Heart left ventricle (tissue), 16 donors: ENCODE measurements at regions of chr7 and their contacts with region 1.

Region 1: DNA sequence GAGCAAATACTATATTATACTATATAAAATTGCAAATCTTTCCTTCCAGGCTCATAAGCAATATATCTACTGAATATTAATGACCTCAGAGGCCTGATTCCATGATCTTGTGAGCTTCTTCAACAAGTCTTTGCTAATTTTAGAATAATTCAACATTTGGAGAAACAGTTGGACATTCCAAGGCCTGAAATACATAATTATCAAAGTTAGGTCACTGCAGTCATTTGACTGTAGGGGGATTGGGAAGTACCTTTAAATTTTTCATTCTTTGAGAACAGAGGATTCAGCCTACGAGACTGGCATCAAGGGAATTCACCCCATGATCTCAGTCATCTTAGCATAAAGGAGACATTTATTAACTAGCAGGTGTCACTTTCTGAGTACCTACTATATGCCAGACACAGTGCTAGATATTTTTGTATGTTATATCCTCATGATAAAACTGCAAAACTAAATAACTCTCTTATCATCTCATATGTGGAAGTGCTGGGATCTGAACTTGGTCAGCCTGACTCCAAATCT is 85.4 kb downstream of the DOCK4 start:
- DNase-seq: no peak
- ATAC-seq: no peak
- H3K4me3 ChIP-seq: no peak overlapping the region
- H3K27ac ChIP-seq: no peak overlapping the region
- H3K4me1 ChIP-seq: peaks cover 0 to 28% (median 6%) of the 10 kb centered on the region in 12 donors
- H3K27me3 ChIP-seq: no peaks in the 10 kb centered on the region
- CTCF ChIP-seq: no peak
- POLR2A ChIP-seq: no peak

Region 2: DNA sequence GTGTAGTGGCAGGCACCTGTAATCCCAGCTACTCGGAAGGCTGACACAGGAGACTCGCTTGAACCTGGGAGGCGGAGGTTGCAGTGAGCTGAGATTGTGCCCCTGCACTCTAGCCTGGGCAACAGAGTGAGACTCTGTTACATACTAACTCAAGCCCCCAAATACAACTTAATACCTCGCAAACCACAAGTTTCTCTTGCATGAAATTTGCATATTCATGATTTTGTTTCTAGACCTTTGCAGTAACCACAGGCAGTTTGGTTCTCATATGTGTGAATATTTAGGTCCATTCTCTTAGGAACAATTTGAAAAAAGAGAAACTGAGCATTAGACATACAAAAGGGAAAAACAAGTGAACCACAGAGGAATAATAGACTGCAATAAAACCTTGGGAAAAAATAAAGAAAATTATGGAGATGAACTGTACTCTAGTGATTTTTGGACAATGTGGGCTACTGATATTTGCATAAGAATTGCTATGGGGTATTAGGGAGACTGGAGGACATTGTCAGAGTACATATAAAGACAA is 162.7 kb after region 1 on chr7:
- intact Hi-C with region 1: loop called in 1 of 10 experiments (anchors 5 kb)
- DNase-seq: no peak
- ATAC-seq: no peak
- H3K4me3 ChIP-seq: no peak overlapping the region
- H3K27ac ChIP-seq: no peak overlapping the region
- H3K4me1 ChIP-seq: peaks cover 0 to 9% (median 0%) of the 10 kb centered on the region in 12 donors
- H3K27me3 ChIP-seq: no peaks in the 10 kb centered on the region
- CTCF ChIP-seq: no peak
- POLR2A ChIP-seq: no peak